ENCODE measurements at regions of chr20 and their contacts with region 1.

Region 1: GRCh38 chr20:18137412-18138265 is at the starts of genes KAT14 and PET117:
- DNase-seq: peak; percentile 67 to 94
- ATAC-seq: peak; percentile 91 to 94
- H3K4me3 ChIP-seq: peak within 1 kb of the TSS; percentile 72
- H3K27ac ChIP-seq: peak within 1 kb of the TSS; percentile 94 to 95
- H3K4me1 ChIP-seq: peaks cover 8% of the 10 kb centered on the region
- CTCF ChIP-seq: 0 out of 3 replicates have a peak, but pooled peaks have one; percentile 7
- EP300 ChIP-seq: no peak
- POLR2A ChIP-seq: peak; percentile 86
- RAD21 ChIP-seq: 0 out of 5 replicates have a peak, but pooled peaks of 1 of the 2 experiments have one; percentile 20
- polyA plus RNA-seq, gene KAT14: 15.7 and 18.8 TPM in 2 replicates
- polyA plus RNA-seq, gene PET117: 22.6 and 32.3 TPM in 2 replicates

Region 2: DNA sequence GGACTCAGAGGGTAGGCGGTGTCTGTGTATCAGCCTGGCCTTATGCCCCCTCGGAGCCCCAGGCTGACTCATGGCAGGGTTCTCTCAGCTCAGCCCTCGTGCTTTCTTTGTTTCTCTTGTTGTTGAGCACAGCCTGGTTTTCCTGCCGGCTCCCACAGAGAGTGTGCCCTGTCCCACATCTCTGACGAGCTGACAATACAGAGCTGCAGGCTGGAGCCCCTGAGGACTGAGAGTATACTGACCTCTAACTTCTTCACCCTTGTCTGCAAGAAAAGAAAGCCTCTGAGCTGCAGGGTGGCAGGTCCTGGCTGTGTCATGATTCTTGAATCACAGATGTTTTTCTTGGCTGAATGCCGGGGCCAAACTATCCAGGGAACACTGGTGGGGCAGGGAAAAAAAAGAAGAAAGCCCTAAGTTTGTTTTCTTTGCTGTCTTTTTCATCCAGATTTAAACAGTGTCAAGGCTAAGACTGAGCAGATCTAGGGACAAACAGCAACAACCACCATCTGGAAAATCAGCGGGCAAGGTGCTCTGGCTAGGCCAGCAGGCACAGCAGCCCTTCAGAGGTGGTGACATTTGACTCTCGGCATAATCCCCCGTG is 87.4 kb after region 1 on chr20:
- CTCF ChIA-PET with region 1: no interaction called
- POLR2A ChIA-PET with region 1: no interaction called
- DNase-seq: peak; percentile 29 to 53
- ATAC-seq: peak; percentile 84 to 85
- H3K4me3 ChIP-seq: no peak overlapping the region
- H3K27ac ChIP-seq: peak overlapping the region; percentile 41 to 61
- H3K4me1 ChIP-seq: peaks cover 19% of the 10 kb centered on the region
- CTCF ChIP-seq: no peak
- EP300 ChIP-seq: no peak
- POLR2A ChIP-seq: no peak
- RAD21 ChIP-seq: no peak

Region 3: DNA sequence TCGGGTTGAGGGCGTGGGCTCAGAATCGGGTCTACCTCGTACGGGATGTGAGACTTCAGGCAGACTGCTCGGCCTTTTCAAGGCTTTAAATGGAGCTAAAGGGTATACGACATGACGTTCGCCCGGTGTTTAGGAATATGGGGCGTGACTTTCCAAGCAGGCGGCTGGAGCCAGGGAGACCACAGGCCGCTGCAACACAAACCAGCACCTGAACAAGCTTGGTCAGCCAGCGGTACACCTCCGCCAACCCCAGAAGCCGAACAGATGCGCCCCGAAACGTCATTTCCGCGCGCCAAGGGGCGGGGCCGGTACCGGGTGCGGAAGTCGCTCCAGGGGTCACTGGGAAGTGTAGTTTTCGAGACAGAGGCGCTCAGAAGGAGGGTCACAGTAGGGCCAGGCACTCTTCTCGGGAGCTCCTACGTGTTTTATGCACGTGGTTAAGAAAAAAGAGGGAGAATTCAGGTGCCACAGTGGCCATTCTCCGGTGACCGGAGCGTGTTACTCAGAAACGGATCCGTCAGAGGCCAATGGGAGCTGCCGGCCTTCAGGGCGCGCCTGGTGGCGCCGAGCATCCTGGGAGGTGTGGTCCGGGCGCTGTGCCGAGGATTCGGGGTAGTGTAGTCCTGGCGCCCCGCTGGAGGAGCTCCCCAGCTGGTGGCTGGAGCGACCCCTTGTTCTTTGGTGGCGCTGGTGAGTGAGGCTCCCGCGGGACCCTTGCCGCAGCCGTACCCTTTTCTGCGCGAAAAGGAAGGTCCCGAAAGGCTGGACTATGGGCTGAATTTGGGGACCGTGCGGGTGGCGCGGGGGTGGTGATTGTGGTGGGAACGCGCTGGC is 150.5 kb after region 1 on chr20 and contains the start of gene ZNF133:
- CTCF ChIA-PET with region 1: interaction called, 5 read pairs
- POLR2A ChIA-PET with region 1: interaction called, 10 read pairs
- DNase-seq: peak; percentile 96
- ATAC-seq: peak; percentile 98
- H3K4me3 ChIP-seq: peak within 1 kb of the TSS; percentile 81
- H3K27ac ChIP-seq: peak within 1 kb of the TSS; percentile 94 to 95
- H3K4me1 ChIP-seq: peaks cover 10% of the 10 kb centered on the region
- CTCF ChIP-seq: no peak
- EP300 ChIP-seq: no peak
- POLR2A ChIP-seq: peak; percentile 92
- RAD21 ChIP-seq: no peak
- polyA plus RNA-seq, gene ZNF133: 11.6 and 16.6 TPM in 2 replicates